Posterior cingulate gyrus (tissue), 11 donors: ENCODE measurements at regions of chr3 and their contacts with region 1.

Region 1: GRCh38 chr3:50370594-50370993 is 11.3 kb upstream of the TMEM115 start:
- DNase-seq: peak in 5 of 10 donors; percentile 45 to 89 (median 81)

Region 2: DNA sequence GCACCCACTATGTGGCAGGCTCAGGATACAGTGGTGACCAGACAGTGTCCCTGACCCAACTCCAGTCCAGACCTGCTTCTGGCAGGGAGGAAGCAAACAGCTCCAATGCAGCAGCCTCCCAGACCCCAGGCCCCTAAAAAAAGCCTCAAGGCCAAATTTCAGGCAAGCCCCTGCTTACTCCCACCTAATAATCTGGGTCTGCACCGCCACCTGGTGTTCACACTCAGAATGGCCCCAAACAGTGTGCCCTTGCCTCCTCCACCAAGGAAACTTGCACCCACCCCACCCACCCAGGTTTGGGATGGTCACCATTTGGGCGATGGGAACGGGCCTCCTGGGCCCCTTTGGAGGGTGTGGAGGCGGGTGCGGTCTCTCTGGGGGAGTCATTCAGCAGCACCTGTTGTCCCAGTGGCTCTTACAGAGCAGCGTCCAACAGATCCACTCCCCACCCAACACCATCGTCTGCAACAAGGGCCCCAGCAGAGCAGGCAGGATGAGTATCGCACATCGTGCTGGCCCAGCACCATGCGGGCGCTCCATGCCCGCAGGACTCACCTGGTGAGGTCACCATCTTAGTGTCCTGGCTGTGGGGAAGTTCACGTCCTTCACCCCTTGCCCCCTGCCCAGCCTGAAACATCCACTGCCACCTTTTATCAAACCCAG is 179.6 kb after region 1 on chr3:
- intact Hi-C with region 1: loop called (anchors 5 kb)
- DNase-seq: peak in 7 of 10 donors; percentile 46 to 90 (median 64)